ENCODE measurements at regions of chr3 and their contacts with region 1.

Region 1: GRCh38 chr3:53072653-53073552 is 27.0 kb upstream of the SFMBT1 start:
- DNase-seq: peak; percentile 97
- H3K4me3 Mint-ChIP-seq: peak overlapping the region; percentile 92
- H3K27ac Mint-ChIP-seq: peak overlapping the region; percentile 94
- H3K4me1 Mint-ChIP-seq: peaks cover 18% of the 10 kb centered on the region
- H3K27me3 Mint-ChIP-seq: no peaks in the 10 kb centered on the region

Region 2: DNA sequence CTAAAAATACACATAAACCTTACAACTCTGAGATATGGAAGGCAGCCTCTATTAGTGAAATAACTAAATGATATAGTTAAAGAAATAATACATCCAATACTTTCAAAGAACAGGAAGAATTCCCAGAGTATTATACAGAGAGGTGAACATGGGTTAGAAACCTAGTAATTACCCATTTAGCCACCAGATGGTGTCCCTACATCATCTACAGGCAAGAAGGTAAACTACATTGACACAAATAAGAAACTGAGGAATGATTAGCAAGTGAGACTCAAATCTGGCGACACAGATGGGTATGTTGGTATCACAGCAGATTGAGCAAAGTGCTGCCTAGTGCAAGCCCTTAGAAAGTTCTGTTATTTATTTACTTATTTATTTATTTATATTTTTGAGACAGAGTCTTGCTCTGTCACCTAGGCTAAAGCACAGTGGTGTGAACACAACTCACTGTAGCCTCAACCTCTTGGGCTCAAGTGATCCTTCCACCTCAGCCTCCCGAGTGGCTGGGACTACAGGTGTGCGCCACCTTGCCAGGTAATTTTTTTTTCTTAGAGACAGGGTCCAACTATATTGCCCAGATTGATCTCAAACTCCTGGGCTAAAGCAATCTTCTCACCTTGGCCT is 330.4 kb before region 1 on chr3:
- intact Hi-C with region 1: loop called (anchors 1 kb)
- DNase-seq: peak; percentile 69
- H3K4me3 Mint-ChIP-seq: no peak overlapping the region
- H3K27ac Mint-ChIP-seq: no peak overlapping the region
- H3K4me1 Mint-ChIP-seq: no peaks in the 10 kb centered on the region
- H3K27me3 Mint-ChIP-seq: no peaks in the 10 kb centered on the region

Region 3: GRCh38 chr3:52851348-52851747 is 221.6 kb before region 1 on chr3:
- intact Hi-C with region 1: loop called (anchors 1 kb)
- DNase-seq: peak; percentile 76
- H3K4me3 Mint-ChIP-seq: no peak overlapping the region
- H3K27ac Mint-ChIP-seq: no peak overlapping the region
- H3K4me1 Mint-ChIP-seq: no peaks in the 10 kb centered on the region
- H3K27me3 Mint-ChIP-seq: no peaks in the 10 kb centered on the region

Region 4: GRCh38 chr3:53102601-53103147 is 29.8 kb after region 1 on chr3:
- intact Hi-C with region 1: loop called (anchors 2 kb)
- DNase-seq: peak; percentile 90
- H3K4me3 Mint-ChIP-seq: peak overlapping the region; percentile 77
- H3K27ac Mint-ChIP-seq: peak overlapping the region; percentile 94
- H3K4me1 Mint-ChIP-seq: peaks cover 72% of the 10 kb centered on the region
- H3K27me3 Mint-ChIP-seq: no peaks in the 10 kb centered on the region

Region 5: DNA sequence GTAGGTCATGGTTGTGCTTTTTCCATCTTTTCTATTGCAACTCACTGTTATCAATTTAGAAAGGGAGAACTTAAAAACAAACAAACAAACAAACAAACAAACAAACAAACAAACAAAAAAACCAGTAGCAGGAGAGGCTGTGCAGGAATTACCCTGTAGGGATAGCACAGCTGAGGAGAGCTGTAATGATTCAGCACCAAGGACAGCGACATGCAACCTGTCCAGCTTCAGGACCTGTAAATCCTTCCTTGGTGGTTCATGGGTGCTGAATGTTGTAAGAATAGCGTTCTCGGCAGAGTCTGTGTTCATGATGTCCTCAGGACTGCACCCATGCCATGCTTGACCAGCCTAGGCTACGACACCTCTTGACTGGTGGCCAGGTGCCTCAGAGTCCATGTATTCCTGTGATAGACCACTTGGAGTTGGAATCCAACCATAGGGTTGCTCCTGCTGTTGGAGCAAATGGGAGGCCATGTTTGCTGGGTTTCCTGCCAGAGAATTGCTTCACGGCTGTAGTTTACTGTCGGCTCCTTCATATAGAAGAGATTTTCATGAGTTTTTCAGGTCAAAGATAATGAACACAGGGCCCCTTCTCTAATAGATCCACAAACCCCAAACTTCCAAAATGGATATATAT is 1115.4 kb after region 1 on chr3:
- intact Hi-C with region 1: no loop called
- DNase-seq: peak; percentile 80
- H3K4me3 Mint-ChIP-seq: no peak overlapping the region
- H3K27ac Mint-ChIP-seq: no peak overlapping the region
- H3K4me1 Mint-ChIP-seq: no peaks in the 10 kb centered on the region
- H3K27me3 Mint-ChIP-seq: no peaks in the 10 kb centered on the region

Measured in activated CD4-positive, alpha-beta T cell treated with anti-CD3 and anti-CD28 coated beads, Interleukin-2, amount 10 ng/mL, durations not matched to agents 24 days and 14 days (primary cell).